ENCODE measurements at regions of chr19 and their contacts with region 1.

Region 1: GRCh38 chr19:17772172-17772571 is 20.9 kb downstream of the FCHO1 start:
- DNase-seq: no peak
- ATAC-seq: no peak
- H3K4me3 ChIP-seq: no peak overlapping the region
- H3K27ac ChIP-seq: no peak overlapping the region
- H3K4me1 ChIP-seq: no peaks in the 10 kb centered on the region
- H3K27me3 ChIP-seq: no peaks in the 10 kb centered on the region
- CTCF ChIP-seq: no peak

Region 2: GRCh38 chr19:17695198-17695597 is 77.0 kb before region 1 on chr19:
- intact Hi-C with region 1: loop called in 1 of 3 experiments (anchors 5 kb)
- DNase-seq: no peak
- ATAC-seq: no peak
- H3K4me3 ChIP-seq: no peak overlapping the region
- H3K27ac ChIP-seq: no peak overlapping the region
- H3K4me1 ChIP-seq: no peaks in the 10 kb centered on the region
- H3K27me3 ChIP-seq: peaks cover 0 to 14% (median 0%) of the 10 kb centered on the region in 4 donors
- CTCF ChIP-seq: no peak